Sigmoid colon (tissue), 7 donors: ENCODE measurements at regions of chr4 and their contacts with region 1.

Region 1: DNA sequence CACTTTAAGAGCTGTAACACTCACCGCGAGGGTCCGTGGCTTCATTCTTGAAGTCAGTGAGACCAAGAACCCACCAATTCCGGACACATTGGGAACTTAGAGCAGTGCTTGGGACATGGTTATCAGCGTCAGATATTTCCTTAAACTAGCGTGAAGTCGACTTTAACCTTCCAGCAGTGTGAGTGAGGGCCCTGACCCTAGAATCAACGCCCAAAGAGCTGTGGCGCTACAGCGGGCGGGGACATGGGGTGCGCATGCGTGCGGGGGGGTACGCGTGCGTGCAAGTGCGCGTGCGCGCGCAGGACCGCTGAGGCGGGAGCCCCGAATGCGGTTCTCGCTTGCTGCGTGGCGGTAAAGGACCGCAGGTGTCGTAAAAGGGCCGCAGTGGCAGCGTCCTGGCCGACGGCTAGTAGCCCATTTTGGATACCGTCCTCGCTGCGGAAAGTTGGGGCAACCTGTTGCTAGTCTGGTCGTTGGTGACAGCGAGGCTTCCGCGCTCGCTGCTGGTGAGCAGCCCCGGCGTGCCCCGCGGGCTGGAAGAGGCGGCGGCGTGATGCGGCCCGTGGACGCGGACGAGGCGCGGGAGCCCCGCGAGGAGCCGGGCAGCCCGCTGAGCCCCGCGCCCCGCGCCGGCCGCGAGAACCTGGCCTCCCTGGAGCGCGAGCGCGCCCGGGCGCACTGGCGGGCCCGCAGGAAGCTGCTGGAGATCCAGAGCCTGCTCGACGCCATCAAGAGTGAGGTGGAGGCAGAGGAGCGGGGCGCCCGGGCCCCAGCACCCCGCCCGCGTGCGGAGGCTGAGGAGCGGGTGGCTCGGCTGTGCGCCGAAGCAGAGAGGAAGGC is 19.8 kb upstream of the S100P start:
- DNase-seq: peak; percentile 98
- H3K4me3 ChIP-seq: peak overlapping the region; percentile 72 to 79 (median 74)
- H3K27ac ChIP-seq: peak overlapping the region; percentile 83 to 93 (median 88)
- H3K4me1 ChIP-seq: peaks cover 0 to 37% (median 37%) of the 10 kb centered on the region in 4 donors
- H3K27me3 ChIP-seq: no peaks in the 10 kb centered on the region
- CTCF ChIP-seq: no peak
- EP300 ChIP-seq: no peak
- POLR2A ChIP-seq: peak in 1 of 2 donors; percentile 54

Region 2: GRCh38 chr4:6633041-6633906 is 40.6 kb before region 1 on chr4:
- intact Hi-C with region 1: no loop called
- DNase-seq: no peak
- H3K4me3 ChIP-seq: no peak overlapping the region
- H3K27ac ChIP-seq: no peak overlapping the region
- H3K4me1 ChIP-seq: no peaks in the 10 kb centered on the region
- H3K27me3 ChIP-seq: no peaks in the 10 kb centered on the region
- CTCF ChIP-seq: no peak
- EP300 ChIP-seq: no peak
- POLR2A ChIP-seq: no peak

Region 3: DNA sequence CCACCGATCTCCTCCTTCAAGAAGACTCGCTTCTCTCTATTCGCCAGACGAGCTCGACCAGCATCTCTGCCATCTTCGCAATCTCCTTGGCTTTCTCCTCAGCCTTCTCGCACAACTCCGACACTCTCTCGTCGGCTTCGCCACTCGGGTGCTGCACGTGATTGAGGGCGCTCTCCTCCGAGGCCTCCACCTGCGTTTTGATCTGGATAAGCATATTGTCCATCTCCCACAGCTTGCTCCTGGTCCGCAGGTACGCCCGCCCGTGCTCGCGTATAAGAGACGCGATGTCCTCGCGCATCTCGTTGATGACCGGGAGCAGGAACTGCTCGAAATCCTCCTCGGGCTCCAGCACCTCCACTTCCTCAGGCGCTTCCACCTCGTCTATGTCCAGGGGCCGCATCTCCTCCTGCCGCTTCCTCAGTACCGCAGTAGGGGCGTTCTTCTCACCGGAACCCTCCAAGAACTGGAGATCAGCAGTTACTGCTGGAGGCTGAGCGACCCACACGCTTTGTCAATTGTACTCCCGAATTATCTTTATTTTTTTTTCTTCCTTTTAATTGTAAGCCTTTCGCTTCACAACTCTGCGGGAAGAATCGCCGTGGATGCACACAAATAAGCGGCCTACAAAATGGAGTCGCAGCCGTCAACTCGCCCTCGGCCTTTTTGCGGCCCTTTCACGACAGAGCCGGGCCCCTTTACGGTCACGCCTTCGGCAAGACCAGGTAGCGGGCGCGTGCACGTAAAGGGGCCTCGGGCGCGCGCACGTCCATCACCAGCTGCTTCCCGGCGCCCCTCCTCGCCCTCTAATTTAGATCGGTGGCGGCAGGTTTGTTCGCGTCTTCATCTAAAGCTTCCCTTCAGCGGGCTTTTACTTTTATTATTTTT is 35.6 kb after region 1 on chr4 and contains the start of gene MRFAP1L1:
- intact Hi-C with region 1: loop called (anchors 2 kb)
- DNase-seq: peak; percentile 97
- H3K4me3 ChIP-seq: peak within 1 kb of the TSS; percentile 70 to 79 (median 73)
- H3K27ac ChIP-seq: peak within 1 kb of the TSS; percentile 82 to 91 (median 89)
- H3K4me1 ChIP-seq: peaks cover 0 to 54% (median 44%) of the 10 kb centered on the region in 4 donors
- H3K27me3 ChIP-seq: no peaks in the 10 kb centered on the region
- CTCF ChIP-seq: no peak
- EP300 ChIP-seq: peak in 1 of 4 donors; percentile 17
- POLR2A ChIP-seq: peak; percentile 25 to 31
- total RNA-seq, gene MRFAP1L1: 53.5 to 82.8 (median 64.8) TPM